Activated T-helper 1 cell treated with anti-CD3 and anti-CD28 coated beads, Interleukin-12 subunit alpha, Interleukin-12 subunit beta, Interleukin-2, Interleukin-4 antibody, amounts not matched to agents 30 ng/mL and 10 ng/mL and 1 ng/mL, durations not matched to agents 14 hours and 24 hours and 36 hours (primary cell): ENCODE measurements at regions of chr9 and their contacts with region 1.

Region 1: DNA sequence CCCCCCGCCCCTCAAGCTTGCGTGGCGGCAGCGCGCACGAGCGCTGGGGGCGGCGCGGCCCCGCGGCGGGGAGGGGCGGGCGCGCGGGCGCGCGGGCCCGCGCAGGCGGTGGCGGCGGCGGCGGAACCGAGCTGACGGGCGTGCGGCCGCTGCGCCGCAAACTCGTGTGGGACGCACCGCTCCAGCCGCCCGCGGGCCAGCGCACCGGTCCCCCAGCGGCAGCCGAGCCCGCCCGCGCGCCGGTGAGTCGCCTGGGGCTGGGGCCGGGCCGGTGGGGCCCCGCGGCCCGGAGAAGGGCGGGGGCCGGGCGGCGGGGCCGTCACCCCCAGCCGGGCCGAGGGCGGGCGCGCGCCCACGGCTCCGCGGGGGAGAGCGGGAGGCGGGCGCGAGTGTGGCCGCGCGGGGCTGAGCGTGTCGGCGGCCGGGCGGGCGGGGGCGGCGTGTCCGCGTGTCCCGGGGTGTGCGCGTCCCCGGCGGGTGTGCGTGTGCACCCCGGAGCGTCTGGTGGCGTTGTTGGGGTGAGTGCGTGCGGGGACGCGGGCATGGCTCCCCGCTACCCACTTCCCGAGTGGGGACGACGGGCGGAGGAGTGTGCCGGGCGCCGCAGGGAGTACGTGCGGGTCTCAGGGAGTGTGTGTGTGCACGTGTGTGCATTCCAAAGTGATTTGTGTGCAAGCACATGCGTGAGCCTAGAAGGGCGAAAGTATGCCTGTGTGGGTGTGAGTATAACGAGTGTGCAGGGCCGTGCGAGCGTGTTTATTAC is at the start of gene NEK6:
- DNase-seq: no peak
- H3K4me3 Mint-ChIP-seq: peak within 1 kb of the TSS; percentile 89
- H3K27ac Mint-ChIP-seq: peak within 1 kb of the TSS; percentile 82
- H3K4me1 Mint-ChIP-seq: peaks cover 54% of the 10 kb centered on the region
- H3K27me3 Mint-ChIP-seq: peaks cover 37% of the 10 kb centered on the region
- total RNA-seq, gene NEK6: 17.4 and 21.0 TPM in 2 replicates

Region 2: GRCh38 chr9:124202447-124202971 is 55.5 kb before region 1 on chr9:
- intact Hi-C with region 1: loop called (anchors 1 kb)
- DNase-seq: peak; percentile 71
- H3K4me3 Mint-ChIP-seq: peak overlapping the region; percentile 58
- H3K27ac Mint-ChIP-seq: peak overlapping the region; percentile 95
- H3K4me1 Mint-ChIP-seq: peaks cover 69% of the 10 kb centered on the region
- H3K27me3 Mint-ChIP-seq: peaks cover 2% of the 10 kb centered on the region

Region 3: DNA sequence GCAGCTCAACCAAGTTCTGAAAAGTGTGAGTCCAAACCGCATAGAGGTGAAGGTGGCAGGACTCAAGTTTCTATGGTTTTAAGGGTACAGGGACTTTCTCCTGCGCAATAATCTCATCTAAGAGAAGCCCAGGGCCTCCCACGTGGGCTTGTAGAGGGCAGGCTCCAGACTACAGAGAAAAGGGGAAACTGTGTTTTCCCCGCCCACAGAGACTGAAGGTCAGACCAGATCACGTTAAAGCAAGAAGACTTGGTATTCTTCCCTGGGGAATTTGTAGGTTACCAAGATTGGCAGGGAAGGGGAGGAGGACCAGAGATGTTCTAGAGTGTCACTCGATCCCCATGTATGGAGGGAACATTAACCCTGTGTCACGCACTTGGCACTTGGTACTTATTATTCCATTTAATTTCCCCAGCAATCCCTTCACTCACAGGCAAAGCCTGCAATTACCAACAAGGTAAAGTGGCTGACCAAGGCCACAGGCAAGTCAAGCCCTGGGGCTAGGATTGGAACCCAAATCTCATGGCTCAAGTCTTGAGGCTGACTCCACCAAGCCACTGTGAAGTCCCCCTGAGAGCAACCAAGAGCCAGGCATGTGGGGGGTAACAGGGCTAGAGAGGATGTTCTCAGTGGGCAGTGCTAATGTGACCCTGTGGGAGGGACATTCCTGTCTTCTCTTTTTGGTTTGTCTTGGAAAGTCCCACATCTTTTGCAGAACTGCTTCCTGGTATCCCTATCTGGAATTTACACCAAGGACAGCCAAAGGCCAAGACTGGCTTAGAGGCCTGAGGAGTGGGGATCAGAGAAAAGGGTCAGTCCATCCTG is 18.6 kb before region 1 on chr9:
- intact Hi-C with region 1: loop called (anchors 1 kb)
- DNase-seq: no peak
- H3K4me3 Mint-ChIP-seq: peak overlapping the region; percentile 6
- H3K27ac Mint-ChIP-seq: peak overlapping the region; percentile 61
- H3K4me1 Mint-ChIP-seq: peaks cover 53% of the 10 kb centered on the region
- H3K27me3 Mint-ChIP-seq: peaks cover 16% of the 10 kb centered on the region

Region 4: DNA sequence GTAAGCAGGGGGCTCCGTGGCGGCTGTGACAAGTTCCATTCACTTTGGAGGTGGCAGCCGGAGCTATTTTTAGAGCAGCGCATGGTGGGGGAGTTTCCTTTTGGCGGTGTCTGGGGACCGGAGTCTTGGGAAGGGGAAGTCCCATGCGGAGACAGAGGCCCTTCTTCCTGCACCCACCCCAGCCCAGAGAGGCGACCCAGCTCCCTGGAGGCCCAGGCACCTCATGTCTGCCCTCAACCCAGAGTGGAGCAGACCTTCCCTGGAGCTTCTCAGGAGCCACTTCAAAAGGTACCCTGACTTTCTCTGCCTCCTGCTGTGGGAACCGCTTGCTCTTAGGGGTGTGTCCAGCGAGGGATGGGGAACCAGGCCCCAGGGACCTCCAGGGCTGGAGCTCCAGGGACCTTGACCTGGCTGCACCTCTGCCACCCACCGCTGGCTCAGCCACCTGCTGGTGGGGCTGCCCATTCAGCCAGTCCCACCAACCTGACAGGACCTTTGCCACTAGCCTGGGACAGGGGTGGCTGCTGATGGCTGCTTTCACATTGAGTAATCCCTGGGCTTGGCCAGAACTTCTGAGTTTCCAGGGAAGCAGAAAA is 33.9 kb after region 1 on chr9:
- intact Hi-C with region 1: loop called (anchors 1 kb)
- DNase-seq: peak; percentile 9
- H3K4me3 Mint-ChIP-seq: peak overlapping the region; percentile 38
- H3K27ac Mint-ChIP-seq: peak overlapping the region; percentile 44
- H3K4me1 Mint-ChIP-seq: peaks cover 37% of the 10 kb centered on the region
- H3K27me3 Mint-ChIP-seq: peaks cover 13% of the 10 kb centered on the region